Mammary epithelial cell (primary cell): ENCODE measurements at regions of chr3 and their contacts with region 1.

Region 1: DNA sequence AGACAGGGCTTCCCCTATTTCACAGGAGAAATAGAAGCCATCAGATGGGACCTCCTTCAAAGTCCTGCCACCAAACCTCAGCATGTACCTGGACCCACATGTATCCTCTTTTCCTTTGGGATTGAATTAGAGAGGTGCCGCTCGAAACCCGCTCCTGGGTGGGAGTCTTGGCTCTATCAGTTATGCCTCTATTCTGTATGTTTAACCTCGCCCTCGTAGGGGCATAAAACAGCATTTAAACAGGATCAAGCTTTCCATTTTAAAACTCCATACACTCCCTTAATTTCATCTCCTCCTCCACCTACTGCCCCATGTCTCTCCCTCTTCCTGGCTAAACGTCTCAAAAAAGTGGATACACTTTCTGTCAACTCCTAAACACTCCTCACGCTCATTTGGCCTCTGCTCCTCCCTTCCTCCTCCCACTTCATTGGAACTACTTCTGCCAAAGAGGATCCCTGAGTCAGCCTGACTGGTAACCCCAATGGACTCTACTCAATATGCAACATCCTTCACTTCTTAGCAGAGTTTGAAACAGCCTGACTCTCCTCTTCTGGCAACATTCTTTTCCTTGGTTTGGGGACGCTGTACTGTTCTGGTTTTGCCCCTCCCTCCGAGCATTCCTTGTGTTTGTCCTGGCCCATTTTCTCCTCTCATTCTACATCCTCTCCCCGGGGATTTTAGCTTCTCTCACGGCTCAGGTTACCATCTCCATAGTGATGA is 23.0 kb upstream of the MUC20 start:
- DNase-seq: peak; percentile 64
- H3K4me3 ChIP-seq: no peak overlapping the region
- H3K27ac ChIP-seq: no peak overlapping the region
- H3K4me1 ChIP-seq: peaks cover 8% of the 10 kb centered on the region
- H3K27me3 ChIP-seq: no peaks in the 10 kb centered on the region
- CTCF ChIP-seq: no peak

Region 2: DNA sequence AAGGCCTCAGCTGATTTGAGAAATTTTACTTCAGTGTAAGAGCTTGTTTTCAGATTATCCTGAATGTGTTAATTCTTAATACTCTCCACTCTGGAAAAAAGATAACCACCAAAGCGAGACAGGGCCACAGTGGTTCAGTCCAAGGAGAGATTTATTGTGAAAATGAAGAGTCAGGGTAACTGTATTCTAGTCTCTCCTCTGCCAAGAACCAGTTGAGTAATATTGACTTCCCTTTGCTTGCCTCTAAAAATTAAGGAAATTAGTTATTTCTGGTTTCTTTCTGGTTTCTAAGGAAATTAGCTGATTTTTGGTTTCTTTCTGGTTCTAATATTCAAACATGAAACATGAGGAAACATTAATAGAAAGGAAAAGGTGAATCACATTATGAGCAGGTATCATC is 189.6 kb before region 1 on chr3:
- CTCF ChIA-PET with region 1: no interaction called
- dilution Hi-C with region 1: no loop called
- in situ Hi-C with region 1: no loop called
- intact Hi-C with region 1: no loop called
- DNase-seq: no peak
- H3K4me3 ChIP-seq: no peak overlapping the region
- H3K27ac ChIP-seq: no peak overlapping the region
- H3K4me1 ChIP-seq: no peaks in the 10 kb centered on the region
- H3K27me3 ChIP-seq: no peaks in the 10 kb centered on the region
- CTCF ChIP-seq: no peak

Region 3: DNA sequence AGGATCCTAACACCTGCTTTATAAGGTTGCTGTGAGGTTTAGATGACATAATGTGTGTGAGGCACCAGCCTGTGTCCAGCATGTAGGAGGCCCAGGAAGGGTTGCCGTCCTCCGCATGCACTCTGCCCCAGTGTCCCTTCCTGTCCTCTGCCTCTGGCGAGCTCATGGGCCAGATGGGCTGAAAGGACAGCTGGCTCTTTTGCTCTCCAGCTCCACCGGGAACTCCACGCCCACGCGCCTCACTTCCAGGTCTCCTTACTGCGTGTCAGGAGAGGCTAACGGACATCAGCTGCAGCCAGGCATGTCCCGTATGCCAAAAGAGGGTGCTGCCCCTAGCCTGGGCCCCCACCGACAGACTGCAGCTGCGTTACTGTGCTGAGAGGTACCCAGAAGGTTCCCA is 35.2 kb after region 1 on chr3:
- CTCF ChIA-PET with region 1: no interaction called
- dilution Hi-C with region 1: loop called (anchors 5 kb)
- in situ Hi-C with region 1: no loop called
- intact Hi-C with region 1: no loop called
- DNase-seq: no peak
- H3K4me3 ChIP-seq: no peak overlapping the region
- H3K27ac ChIP-seq: no peak overlapping the region
- H3K4me1 ChIP-seq: no peaks in the 10 kb centered on the region
- H3K27me3 ChIP-seq: peaks cover 3% of the 10 kb centered on the region
- CTCF ChIP-seq: no peak

Region 4: GRCh38 chr3:195956571-195956970 is 258.8 kb after region 1 on chr3:
- CTCF ChIA-PET with region 1: no interaction called
- dilution Hi-C with region 1: no loop called
- in situ Hi-C with region 1: loop called in 1 of 2 experiments (anchors 25 kb)
- intact Hi-C with region 1: no loop called
- DNase-seq: no peak
- H3K4me3 ChIP-seq: no peak overlapping the region
- H3K27ac ChIP-seq: no peak overlapping the region
- H3K4me1 ChIP-seq: no peaks in the 10 kb centered on the region
- H3K27me3 ChIP-seq: no peaks in the 10 kb centered on the region
- CTCF ChIP-seq: no peak